Caco-2 (cell line): ENCODE measurements at regions of chr7 and their contacts with region 1.

Region 1: GRCh38 chr7:135335628-135336139 is 102.0 kb downstream of the STRA8 start:
- DNase-seq: peak; percentile 93 to 94
- H3K4me3 ChIP-seq: no peak overlapping the region
- H3K4me3 Mint-ChIP-seq: no peak overlapping the region
- H3K27ac Mint-ChIP-seq: no peak overlapping the region
- H3K4me1 ChIP-seq: peaks cover 5% of the 10 kb centered on the region; the same call in 1 of the 2 replicates
- H3K4me1 Mint-ChIP-seq: peaks cover 7% of the 10 kb centered on the region
- H3K27me3 ChIP-seq: no peaks in the 10 kb centered on the region
- H3K27me3 Mint-ChIP-seq: peaks cover 8% of the 10 kb centered on the region
- CTCF ChIP-seq: peak; percentile 70 to 82

Region 2: DNA sequence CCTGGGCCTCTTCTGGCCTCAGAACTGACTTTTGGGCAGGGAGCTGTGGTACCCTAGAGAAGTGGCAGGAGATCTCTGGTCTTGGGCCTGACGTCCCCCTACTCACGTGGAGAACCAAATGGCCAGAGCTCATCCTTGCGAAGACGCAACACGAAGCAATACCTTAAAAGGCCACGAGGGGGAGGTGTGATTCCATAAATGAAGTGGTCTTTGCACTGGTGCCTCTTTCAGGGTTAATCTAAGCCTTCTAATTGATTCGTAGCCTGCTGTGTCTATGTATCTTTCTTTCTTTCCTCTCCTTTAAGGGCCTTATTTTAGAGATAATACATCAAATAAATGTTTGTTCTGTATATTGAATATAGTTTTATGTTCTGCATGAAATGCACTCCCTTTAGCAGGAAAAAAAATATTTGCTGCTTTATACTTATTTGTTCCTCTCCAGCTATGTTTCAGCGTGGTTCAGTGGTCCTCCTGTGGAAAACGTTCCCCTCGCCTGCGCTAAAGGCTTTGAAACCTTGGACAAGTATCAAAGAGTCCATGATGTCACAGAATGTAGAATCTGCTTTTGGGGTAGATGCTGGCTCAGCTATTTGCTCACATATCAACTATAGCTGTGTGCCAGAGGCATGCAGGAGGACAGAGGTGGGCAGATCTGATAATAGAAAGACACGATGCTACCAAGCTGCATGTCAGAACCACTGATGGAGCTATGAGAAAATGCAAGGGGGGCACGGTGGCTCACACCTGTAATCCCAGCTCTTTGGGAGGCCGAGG is 61.0 kb before region 1 on chr7:
- CTCF ChIA-PET with region 1: interaction called, 79 read pairs
- POLR2A ChIA-PET with region 1: no interaction called
- intact Hi-C with region 1: no loop called
- DNase-seq: peak; percentile 56 to 78
- H3K4me3 ChIP-seq: no peak overlapping the region
- H3K4me3 Mint-ChIP-seq: no peak overlapping the region
- H3K27ac Mint-ChIP-seq: no peak overlapping the region
- H3K4me1 ChIP-seq: no peaks in the 10 kb centered on the region
- H3K4me1 Mint-ChIP-seq: no peaks in the 10 kb centered on the region
- H3K27me3 ChIP-seq: no peaks in the 10 kb centered on the region
- H3K27me3 Mint-ChIP-seq: no peaks in the 10 kb centered on the region
- CTCF ChIP-seq: peak; percentile 65 to 92

Region 3: DNA sequence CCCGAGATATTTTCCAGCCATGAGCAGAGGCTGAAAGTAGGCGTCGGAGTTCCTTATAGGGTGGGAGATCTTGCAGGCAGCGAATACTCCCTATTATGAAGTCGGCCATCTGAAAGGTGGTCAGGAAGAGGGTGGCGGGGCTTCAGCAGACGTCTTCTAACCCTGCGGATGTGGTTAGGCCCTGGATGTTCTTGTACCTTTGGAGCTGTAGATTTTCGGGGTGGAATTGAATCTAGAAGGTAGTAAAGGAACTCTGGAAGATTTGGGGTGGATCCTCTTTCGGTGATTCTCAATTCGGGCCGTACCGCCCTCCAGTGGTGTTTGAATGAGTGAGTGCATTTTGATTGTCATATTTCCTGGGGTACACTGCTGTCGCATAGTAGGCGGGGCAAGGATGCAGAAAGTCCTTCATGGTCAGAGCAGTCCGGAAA is 222.7 kb after region 1 on chr7:
- CTCF ChIA-PET with region 1: interaction called, 3 read pairs
- POLR2A ChIA-PET with region 1: no interaction called
- intact Hi-C with region 1: loop called (anchors 5 kb)
- DNase-seq: peak; percentile 72 to 74
- H3K4me3 ChIP-seq: peak overlapping the region; percentile 82
- H3K4me3 Mint-ChIP-seq: no peak overlapping the region
- H3K27ac Mint-ChIP-seq: no peak overlapping the region
- H3K4me1 ChIP-seq: peaks cover 28% of the 10 kb centered on the region
- H3K4me1 Mint-ChIP-seq: peaks cover 7% of the 10 kb centered on the region
- H3K27me3 ChIP-seq: no peaks in the 10 kb centered on the region
- H3K27me3 Mint-ChIP-seq: peaks cover 4% of the 10 kb centered on the region
- CTCF ChIP-seq: peak; percentile 45 to 51

Region 4: DNA sequence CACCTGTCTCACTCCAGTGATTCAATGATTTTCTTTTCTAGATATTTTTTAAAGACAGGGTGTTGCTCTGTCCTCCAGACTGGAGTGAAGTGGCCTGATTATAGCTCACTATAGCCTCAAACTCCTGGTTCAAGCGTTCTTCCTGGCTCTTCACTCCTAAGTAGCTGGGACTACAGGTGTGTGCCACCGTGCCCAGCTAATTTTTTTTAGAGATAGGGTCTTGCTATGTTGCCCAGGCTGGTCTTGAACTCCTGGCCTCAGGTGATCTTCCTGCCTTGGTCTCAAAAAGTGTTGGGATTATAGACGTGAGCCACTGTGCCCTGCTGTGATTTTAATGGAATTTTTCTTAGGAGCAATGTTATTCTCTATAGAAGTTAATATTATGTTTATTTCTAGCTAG is 236.2 kb after region 1 on chr7:
- CTCF ChIA-PET with region 1: no interaction called
- POLR2A ChIA-PET with region 1: no interaction called
- intact Hi-C with region 1: no loop called
- DNase-seq: no peak
- H3K4me3 ChIP-seq: no peak overlapping the region
- H3K4me3 Mint-ChIP-seq: no peak overlapping the region
- H3K27ac Mint-ChIP-seq: no peak overlapping the region
- H3K4me1 ChIP-seq: no peaks in the 10 kb centered on the region
- H3K4me1 Mint-ChIP-seq: no peaks in the 10 kb centered on the region
- H3K27me3 ChIP-seq: no peaks in the 10 kb centered on the region
- H3K27me3 Mint-ChIP-seq: no peaks in the 10 kb centered on the region
- CTCF ChIP-seq: no peak